IMR-90 (cell line): ENCODE measurements at regions of chr1 and their contacts with region 1.

Region 1: GRCh38 chr1:100122177-100122576 is 10.6 kb downstream of the SASS6 start:
- DNase-seq: no peak
- ATAC-seq: no peak
- H3K4me3 ChIP-seq: no peak overlapping the region
- H3K27ac ChIP-seq: no peak overlapping the region
- H3K4me1 ChIP-seq: no peaks in the 10 kb centered on the region
- H3K27me3 ChIP-seq: no peaks in the 10 kb centered on the region
- CTCF ChIP-seq: no peak
- POLR2A ChIP-seq: no peak
- RAD21 ChIP-seq: no peak

Region 2: GRCh38 chr1:100087396-100087795 is 34.8 kb before region 1 on chr1:
- CTCF ChIA-PET with region 1: no interaction called
- POLR2A ChIA-PET with region 1: interaction called, 3 read pairs
- dilution Hi-C with region 1: no loop called
- in situ Hi-C with region 1: loop called (anchors 5 kb)
- intact Hi-C with region 1: no loop called
- DNase-seq: no peak
- ATAC-seq: no peak
- H3K4me3 ChIP-seq: no peak overlapping the region
- H3K27ac ChIP-seq: no peak overlapping the region
- H3K4me1 ChIP-seq: no peaks in the 10 kb centered on the region
- H3K27me3 ChIP-seq: no peaks in the 10 kb centered on the region
- CTCF ChIP-seq: no peak
- POLR2A ChIP-seq: no peak
- RAD21 ChIP-seq: no peak

Region 3: DNA sequence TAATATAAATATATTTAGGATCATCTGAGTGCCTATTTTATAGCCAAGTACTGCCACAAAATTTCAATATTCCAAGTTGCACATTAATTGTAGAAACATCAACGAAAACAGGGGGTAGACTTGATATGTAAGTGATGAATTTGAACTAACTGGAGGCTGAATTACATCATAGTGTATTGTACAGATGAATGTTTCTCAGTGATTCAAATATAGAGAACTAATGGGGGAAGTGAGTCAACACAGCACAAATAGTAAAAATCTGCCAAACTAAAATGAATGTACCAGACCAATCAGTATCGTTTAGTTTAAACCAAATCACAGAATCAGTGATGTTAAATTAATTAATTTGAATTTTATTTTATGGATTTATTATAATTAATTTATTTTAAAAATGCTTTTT is 186.6 kb after region 1 on chr1:
- CTCF ChIA-PET with region 1: no interaction called
- POLR2A ChIA-PET with region 1: no interaction called
- dilution Hi-C with region 1: no loop called
- in situ Hi-C with region 1: no loop called
- intact Hi-C with region 1: no loop called
- DNase-seq: peak; percentile 70
- ATAC-seq: no peak; the same call in 1 of the 2 replicates
- H3K4me3 ChIP-seq: no peak overlapping the region
- H3K27ac ChIP-seq: no peak overlapping the region
- H3K4me1 ChIP-seq: no peaks in the 10 kb centered on the region
- H3K27me3 ChIP-seq: peaks cover 2% of the 10 kb centered on the region; the same call in 1 of the 2 replicates
- CTCF ChIP-seq: no peak
- POLR2A ChIP-seq: no peak
- RAD21 ChIP-seq: no peak